Panc1 (cell line): ENCODE measurements at regions of chr20 and their contacts with region 1.

Region 1: DNA sequence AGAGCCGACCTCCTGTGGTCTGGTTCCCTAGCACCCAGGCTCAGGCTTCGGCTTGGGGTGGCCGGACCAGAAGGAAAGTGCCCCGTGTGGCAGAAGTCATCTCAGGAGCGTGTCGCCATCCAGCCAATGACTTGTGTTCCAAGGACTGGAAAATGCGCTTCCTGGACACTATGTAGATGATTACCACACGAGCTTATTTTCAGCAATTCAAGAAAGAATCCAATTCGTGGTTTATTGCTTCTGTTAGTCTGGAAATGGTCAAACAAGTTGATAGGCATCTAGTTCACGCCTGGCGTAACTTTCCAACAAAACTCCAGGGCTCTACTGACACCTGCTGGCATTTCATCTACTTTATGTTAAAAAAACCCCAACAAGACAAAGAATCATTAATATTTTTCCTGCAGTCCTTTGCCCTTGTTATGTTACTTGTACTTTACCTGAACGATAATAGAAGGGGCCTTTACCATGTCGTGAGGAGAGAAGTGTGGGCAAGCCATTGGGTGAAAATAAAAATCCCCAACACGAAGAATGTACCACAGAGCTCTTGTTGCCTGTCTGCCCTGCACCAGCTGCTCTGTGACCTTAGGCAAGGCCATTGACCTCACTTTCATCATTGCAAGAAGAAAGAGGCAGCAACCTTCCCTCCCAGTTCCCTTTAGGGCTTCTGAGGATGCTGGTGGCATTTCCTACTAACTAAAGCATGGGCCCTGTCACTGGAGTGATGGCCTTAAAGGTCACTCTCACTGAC is 154.7 kb upstream of the LAMP5 start:
- DNase-seq: peak; percentile 12
- ATAC-seq: peak; percentile 60; the same call in 1 of the 2 replicates
- H3K4me3 ChIP-seq: no peak overlapping the region
- H3K27ac ChIP-seq: no peak overlapping the region
- H3K4me1 ChIP-seq: no peaks in the 10 kb centered on the region
- H3K27me3 ChIP-seq: no peaks in the 10 kb centered on the region
- CTCF ChIP-seq: peak; percentile 48; the same call in 1 of the 2 replicates

Region 2: DNA sequence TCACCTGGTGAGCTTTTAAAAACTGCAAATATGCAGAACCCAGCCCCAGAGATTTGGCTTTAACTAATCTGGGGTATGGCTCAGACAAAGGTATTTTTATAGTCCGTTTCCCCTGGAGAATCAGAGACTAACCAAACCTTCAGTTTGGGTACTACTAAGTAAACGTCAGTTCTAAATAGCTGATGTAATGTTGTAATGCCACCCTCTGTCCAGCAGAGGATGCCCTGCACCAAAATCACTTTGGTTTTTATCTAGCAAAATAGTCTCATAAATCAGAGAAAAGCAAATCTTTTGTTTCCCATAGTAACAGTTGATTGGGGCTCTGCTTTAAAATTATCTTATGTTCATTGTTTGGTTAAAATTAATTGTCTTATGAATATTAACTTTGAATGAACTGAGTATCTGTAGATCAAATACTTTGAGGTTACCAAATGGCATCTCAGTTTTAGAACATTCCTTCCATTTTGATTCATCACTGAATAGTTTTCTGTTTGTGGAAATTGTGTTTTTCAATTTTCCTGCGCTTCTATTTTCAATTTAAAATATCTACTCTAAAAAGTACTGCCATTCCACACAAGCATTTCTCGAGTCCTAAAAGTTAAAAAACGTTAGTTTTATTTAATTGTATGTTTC is 569.2 kb before region 1 on chr20:
- CTCF ChIA-PET with region 1: interaction called, 3 read pairs
- POLR2A ChIA-PET with region 1: no interaction called
- in situ Hi-C with region 1: no loop called
- intact Hi-C with region 1: loop called (anchors 10 kb)
- DNase-seq: peak; percentile 51
- ATAC-seq: no peak
- H3K4me3 ChIP-seq: no peak overlapping the region
- H3K27ac ChIP-seq: no peak overlapping the region
- H3K4me1 ChIP-seq: no peaks in the 10 kb centered on the region
- H3K27me3 ChIP-seq: no peaks in the 10 kb centered on the region
- CTCF ChIP-seq: peak; percentile 89

Region 3: DNA sequence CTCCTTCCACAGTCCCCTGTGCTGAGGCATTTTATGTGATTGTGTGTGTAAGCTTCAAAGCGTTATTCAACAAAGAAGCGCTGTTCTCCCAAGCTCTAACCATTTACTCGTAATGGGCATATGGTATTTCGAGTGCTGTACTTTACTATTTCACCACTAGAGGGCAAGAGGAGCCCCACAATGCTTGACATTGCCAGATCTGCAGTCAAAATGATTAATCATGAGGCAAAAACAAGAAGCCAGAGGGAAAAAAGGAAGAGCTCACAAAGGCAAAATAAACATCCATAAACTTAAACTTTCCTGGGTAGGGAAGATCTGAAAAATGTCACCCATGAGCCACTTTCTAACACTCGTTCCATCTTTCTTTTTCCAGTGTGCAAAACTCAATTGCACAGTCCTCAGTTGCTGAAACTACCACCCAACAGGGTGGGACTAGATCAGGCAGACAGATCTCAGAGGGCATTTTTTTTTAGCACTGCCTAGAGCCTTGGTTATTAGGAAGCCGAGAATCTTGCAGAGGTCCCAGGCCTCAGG is 505.9 kb before region 1 on chr20:
- CTCF ChIA-PET with region 1: no interaction called
- POLR2A ChIA-PET with region 1: no interaction called
- in situ Hi-C with region 1: no loop called
- intact Hi-C with region 1: loop called (anchors 1 kb)
- DNase-seq: peak; percentile 51
- ATAC-seq: peak; percentile 92
- H3K4me3 ChIP-seq: no peak overlapping the region
- H3K27ac ChIP-seq: no peak overlapping the region
- H3K4me1 ChIP-seq: no peaks in the 10 kb centered on the region
- H3K27me3 ChIP-seq: no peaks in the 10 kb centered on the region
- CTCF ChIP-seq: peak; percentile 87